ENCODE measurements at regions of chr4 and their contacts with region 1.

Region 1: DNA sequence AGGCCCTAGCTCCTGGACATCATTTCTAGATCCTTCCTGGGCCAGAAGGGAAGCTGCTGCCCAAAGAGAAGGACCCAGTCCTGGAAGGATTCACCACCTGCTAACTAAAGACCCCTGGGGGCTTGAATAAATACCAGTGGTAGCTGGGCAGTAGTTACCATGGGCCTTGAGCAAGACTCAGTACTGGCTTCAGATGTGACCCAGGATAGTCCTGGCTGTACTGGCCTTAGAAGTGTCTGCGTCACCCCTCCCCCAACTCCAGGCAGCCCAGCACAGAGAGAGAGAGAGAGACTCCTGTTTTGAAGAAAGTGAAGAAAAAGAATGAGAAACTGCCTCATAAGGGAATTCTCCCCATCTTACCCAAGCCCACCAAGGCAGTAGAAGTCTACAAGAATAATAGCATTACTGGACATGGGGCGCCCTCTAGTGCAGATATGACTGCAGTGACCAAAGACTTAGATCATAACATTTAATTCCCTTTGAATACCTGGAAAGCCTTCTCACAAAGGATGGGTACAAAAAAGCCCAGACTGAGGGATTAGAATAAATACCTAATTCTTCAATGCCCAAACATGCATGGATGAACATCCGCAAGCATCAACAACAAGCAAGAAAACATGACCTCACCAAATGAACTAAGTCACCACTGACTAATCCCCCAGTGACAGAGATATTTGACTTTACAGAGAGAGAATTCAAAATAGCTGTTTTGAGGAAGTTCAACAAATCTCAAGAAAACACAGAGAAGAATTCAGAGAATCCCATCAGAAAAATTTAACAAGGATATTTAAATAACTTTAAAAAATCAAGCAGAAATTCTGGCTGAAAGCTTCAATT is 171.8 kb downstream of the HNRNPD start:
- DNase-seq: peak in 7 of 9 experiments; percentile 6 to 64 (median 37)
- ATAC-seq: peak; percentile 34
- H3K4me3 ChIP-seq: no peak overlapping the region
- H3K4me3 Mint-ChIP-seq: no peak overlapping the region
- H3K27ac ChIP-seq: no peak overlapping the region
- H3K27ac Mint-ChIP-seq: no peak overlapping the region
- H3K4me1 ChIP-seq: no peaks in the 10 kb centered on the region
- H3K4me1 Mint-ChIP-seq: peaks cover 5% of the 10 kb centered on the region
- H3K27me3 ChIP-seq: peaks cover 0 to 3% of the 10 kb centered on the region in 2 experiments
- H3K27me3 Mint-ChIP-seq: peaks cover 3% of the 10 kb centered on the region
- CTCF ChIP-seq: peak; percentile 75

Region 2: DNA sequence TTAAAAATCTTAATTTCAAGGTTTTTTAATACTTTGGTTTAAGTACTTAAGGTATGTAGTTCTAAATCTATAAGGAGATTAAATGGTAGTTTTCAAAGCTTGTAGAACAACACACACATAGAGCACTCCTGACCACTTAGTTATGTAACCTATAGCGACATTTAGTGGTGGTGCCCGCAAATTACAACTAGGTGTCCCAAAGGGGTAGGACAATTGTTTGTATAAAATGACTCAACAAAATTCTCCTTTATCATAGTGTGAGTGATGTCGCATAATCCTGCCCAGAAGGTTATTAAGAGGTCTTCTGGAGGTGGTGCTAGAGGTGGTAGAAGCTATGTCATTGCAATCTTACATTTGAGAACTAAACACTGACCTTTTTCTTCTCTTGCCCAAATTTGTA is 357.3 kb before region 1 on chr4:
- CTCF ChIA-PET with region 1: interaction called, 7 read pairs
- POLR2A ChIA-PET with region 1: no interaction called
- intact Hi-C with region 1: loop called (anchors 1 to 2 kb)
- DNase-seq: peak; percentile 27 to 81 (median 73)
- ATAC-seq: peak; percentile 96
- H3K4me3 ChIP-seq: no peak overlapping the region
- H3K4me3 Mint-ChIP-seq: no peak overlapping the region
- H3K27ac ChIP-seq: no peak overlapping the region
- H3K27ac Mint-ChIP-seq: no peak overlapping the region
- H3K4me1 ChIP-seq: no peaks in the 10 kb centered on the region
- H3K4me1 Mint-ChIP-seq: no peaks in the 10 kb centered on the region
- H3K27me3 ChIP-seq: no peaks in the 10 kb centered on the region
- H3K27me3 Mint-ChIP-seq: no peaks in the 10 kb centered on the region
- CTCF ChIP-seq: peak; percentile 79